AG04449 (cell line): ENCODE measurements at regions of chr9 and their contacts with region 1.

Region 1: GRCh38 chr9:114434878-114435311 is 47.1 kb upstream of the AKNA start:
- DNase-seq: no peak
- H3K4me3 ChIP-seq: no peak overlapping the region
- CTCF ChIP-seq: peak; percentile 66

Region 2: GRCh38 chr9:114413861-114414301 is 21.0 kb before region 1 on chr9:
- CTCF ChIA-PET with region 1: interaction called, 39 read pairs
- POLR2A ChIA-PET with region 1: no interaction called
- DNase-seq: no peak
- H3K4me3 ChIP-seq: no peak overlapping the region
- CTCF ChIP-seq: no peak

Region 3: DNA sequence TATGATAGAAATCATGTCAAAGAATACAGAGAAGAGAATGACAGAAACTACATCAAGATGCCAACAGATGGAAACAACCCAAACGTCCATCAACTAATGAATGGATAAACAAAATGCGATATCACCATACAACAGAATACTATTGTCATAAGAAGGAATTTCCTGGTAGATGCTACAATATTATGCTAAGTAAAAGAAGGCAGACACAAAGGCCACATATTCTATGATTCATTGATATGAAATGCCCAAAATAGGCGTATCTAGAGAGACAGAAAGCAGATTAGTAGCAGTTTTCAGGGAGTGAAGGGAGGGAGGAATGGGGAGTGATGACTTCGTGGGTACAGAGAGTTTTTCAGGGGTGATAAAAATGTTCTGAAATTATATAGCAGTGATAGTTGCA is 11.1 kb after region 1 on chr9:
- CTCF ChIA-PET with region 1: interaction called, 29 read pairs
- POLR2A ChIA-PET with region 1: no interaction called
- DNase-seq: no peak
- H3K4me3 ChIP-seq: no peak overlapping the region
- CTCF ChIP-seq: no peak

Region 4: GRCh38 chr9:114450833-114451706 is 16.2 kb after region 1 on chr9:
- CTCF ChIA-PET with region 1: interaction called, 29 read pairs
- POLR2A ChIA-PET with region 1: no interaction called
- DNase-seq: no peak
- H3K4me3 ChIP-seq: no peak overlapping the region
- CTCF ChIP-seq: no peak